Dorsolateral prefrontal cortex (tissue), 120 donors: ENCODE measurements at regions of chr15 and their contacts with region 1.

Region 1: GRCh38 chr15:97909291-97909891 is 51.1 kb upstream of the ARRDC4 start:
- DNase-seq: peak in 9 of 10 donors; percentile 24 to 78 (median 65)
- H3K4me3 ChIP-seq: no peak overlapping the region
- H3K27ac ChIP-seq: no peak overlapping the region
- H3K27me3 ChIP-seq: peaks cover 0 to 69% (median 7%) of the 10 kb centered on the region in 45 donors
- CTCF ChIP-seq: peak; percentile 57 to 95 (median 85)

Region 2: GRCh38 chr15:97968380-97968779 is 59.0 kb after region 1 on chr15:
- intact Hi-C with region 1: no loop called
- DNase-seq: no peak
- H3K4me3 ChIP-seq: no peak overlapping the region
- H3K27ac ChIP-seq: peak overlapping the region in 1 of 59 donors; percentile 1
- H3K27me3 ChIP-seq: no peaks in the 10 kb centered on the region
- CTCF ChIP-seq: no peak

Region 3: DNA sequence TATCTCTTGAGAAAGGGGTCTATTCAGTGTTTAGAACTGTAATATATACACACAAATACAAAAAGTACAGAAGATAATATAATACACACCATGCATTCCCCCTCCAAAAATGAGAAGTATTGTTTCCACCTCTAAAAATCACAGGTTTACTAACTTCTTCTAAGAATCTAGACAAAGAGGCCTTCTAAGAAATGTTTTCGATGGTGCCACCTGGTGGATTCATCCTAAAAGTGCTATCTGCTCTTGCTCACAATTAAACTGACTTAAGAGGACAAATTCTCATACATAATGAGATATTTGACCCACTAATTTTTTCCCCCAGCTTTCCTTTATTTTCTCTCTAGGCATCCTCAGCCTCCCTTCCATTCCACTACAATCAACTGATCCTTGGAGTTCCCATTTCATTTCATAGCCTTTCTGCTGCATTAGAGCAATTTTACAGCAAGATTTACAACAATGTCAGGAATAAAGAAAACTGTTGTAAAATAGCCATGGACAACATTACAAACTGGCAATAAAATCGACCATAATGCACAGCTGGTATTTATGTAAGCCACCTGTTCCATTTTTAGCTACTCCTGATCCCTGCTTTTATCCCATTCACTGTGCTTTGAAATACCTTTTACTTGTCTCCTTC is 175.7 kb after region 1 on chr15:
- intact Hi-C with region 1: loop called (anchors 2 to 5 kb)
- DNase-seq: peak in 4 of 10 donors; percentile 7 to 58 (median 25)
- H3K4me3 ChIP-seq: no peak overlapping the region
- H3K27ac ChIP-seq: no peak overlapping the region
- H3K27me3 ChIP-seq: peaks cover 0 to 4% (median 0%) of the 10 kb centered on the region in 45 donors
- CTCF ChIP-seq: peak; percentile 61 to 90 (median 75)

Region 4: GRCh38 chr15:98428253-98428989 is 519.0 kb after region 1 on chr15:
- intact Hi-C with region 1: loop called in 1 of 2 experiments (anchors 10 kb)
- DNase-seq: peak; percentile 16 to 81 (median 60)
- H3K4me3 ChIP-seq: peak overlapping the region in 58 of 59 donors; percentile 3 to 65 (median 50)
- H3K27ac ChIP-seq: peak overlapping the region in 8 of 59 donors; percentile 8 to 60 (median 36)
- H3K27me3 ChIP-seq: peaks cover 0 to 27% (median 6%) of the 10 kb centered on the region in 45 donors
- CTCF ChIP-seq: peak; percentile 69 to 95 (median 86)